Activated CD4-positive, alpha-beta T cell treated with anti-CD3 and anti-CD28 coated beads, Interleukin-2, amount 10 ng/mL, durations not matched to agents 24 days and 14 days (primary cell): ENCODE measurements at regions of chr6 and their contacts with region 1.

Region 1: DNA sequence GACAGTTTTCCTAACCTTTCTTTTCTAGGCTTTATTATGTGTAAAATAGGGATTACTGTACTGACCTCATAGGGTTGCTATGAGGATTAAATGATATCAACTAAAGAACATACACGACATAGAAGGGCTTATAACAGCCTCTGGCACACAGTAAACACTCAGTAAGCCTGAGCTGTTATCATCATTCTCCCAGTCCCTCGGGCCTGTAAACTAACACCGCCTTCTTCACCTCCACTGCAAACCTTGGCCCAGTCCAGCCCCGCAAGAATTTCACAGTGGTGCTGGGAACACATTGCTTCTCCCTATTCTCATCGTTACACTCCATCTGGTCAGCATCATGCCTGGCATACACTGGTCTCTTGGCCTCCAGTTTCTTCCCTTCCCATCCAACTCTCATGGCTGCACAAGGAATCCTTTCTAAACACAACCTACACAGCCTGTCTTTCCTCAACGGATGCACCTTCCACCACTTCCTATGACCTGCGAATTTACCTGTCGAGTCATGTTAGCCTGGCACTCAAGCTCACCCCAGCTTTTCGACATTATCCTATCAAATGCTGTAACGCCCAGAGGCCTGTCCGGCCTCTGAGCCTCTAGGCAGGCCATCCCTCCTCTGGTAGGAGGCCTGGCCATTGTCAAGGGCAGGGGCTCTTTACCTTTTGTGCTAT is 92.1 kb downstream of the FYN start:
- DNase-seq: no peak
- H3K4me3 Mint-ChIP-seq: no peak overlapping the region
- H3K27ac Mint-ChIP-seq: peak overlapping the region; percentile 19
- H3K4me1 Mint-ChIP-seq: peaks cover 78% of the 10 kb centered on the region
- H3K27me3 Mint-ChIP-seq: no peaks in the 10 kb centered on the region

Region 2: GRCh38 chr6:111680015-111680712 is 101.0 kb before region 1 on chr6:
- intact Hi-C with region 1: no loop called
- DNase-seq: no peak
- H3K4me3 Mint-ChIP-seq: no peak overlapping the region
- H3K27ac Mint-ChIP-seq: no peak overlapping the region
- H3K4me1 Mint-ChIP-seq: peaks cover 30% of the 10 kb centered on the region
- H3K27me3 Mint-ChIP-seq: no peaks in the 10 kb centered on the region

Region 3: DNA sequence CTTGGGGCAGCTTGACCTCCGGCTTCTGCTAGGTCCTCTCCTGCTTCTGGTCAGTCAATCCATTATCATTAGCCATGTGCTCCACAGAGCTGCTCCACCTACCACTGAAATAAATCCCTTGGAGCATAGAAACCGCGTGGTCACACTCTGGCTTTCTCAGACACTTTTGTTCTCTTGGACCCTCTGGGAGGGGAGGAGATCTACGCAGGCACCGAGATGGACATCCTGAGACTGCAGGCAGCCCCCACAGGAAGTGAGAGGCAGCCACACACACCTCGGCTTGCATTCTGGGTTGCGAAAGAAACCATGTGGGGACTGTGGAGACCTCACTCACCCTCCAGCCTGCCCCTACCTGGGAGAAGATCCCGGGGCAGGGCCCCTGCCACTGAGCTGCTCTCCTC is 12.5 kb after region 1 on chr6:
- intact Hi-C with region 1: loop called (anchors 2 kb)
- DNase-seq: peak; percentile 80
- H3K4me3 Mint-ChIP-seq: peak overlapping the region; percentile 45
- H3K27ac Mint-ChIP-seq: peak overlapping the region; percentile 85
- H3K4me1 Mint-ChIP-seq: peaks cover 63% of the 10 kb centered on the region
- H3K27me3 Mint-ChIP-seq: no peaks in the 10 kb centered on the region